Common myeloid progenitor, CD34-positive (primary cell): ENCODE measurements at regions of chr21 and their contacts with region 1.

Region 1: GRCh38 chr21:32597205-32597604 is 11.9 kb upstream of the TCP10L start:
- DNase-seq: no peak
- H3K4me3 ChIP-seq: no peak overlapping the region
- H3K27ac ChIP-seq: no peak overlapping the region
- H3K4me1 ChIP-seq: no peaks in the 10 kb centered on the region
- H3K27me3 ChIP-seq: no peaks in the 10 kb centered on the region

Region 2: GRCh38 chr21:32120230-32120629 is 477.0 kb before region 1 on chr21:
- CTCF ChIA-PET with region 1: no interaction called
- POLR2A ChIA-PET with region 1: interaction called, 10 read pairs
- DNase-seq: no peak
- H3K4me3 ChIP-seq: no peak overlapping the region
- H3K27ac ChIP-seq: no peak overlapping the region
- H3K4me1 ChIP-seq: no peaks in the 10 kb centered on the region
- H3K27me3 ChIP-seq: no peaks in the 10 kb centered on the region

Region 3: GRCh38 chr21:32403201-32403777 is 193.9 kb before region 1 on chr21:
- CTCF ChIA-PET with region 1: interaction called, 110 read pairs
- POLR2A ChIA-PET with region 1: interaction called, 3 read pairs
- DNase-seq: peak; percentile 59 to 83 (median 79)
- H3K4me3 ChIP-seq: no peak overlapping the region
- H3K27ac ChIP-seq: no peak overlapping the region
- H3K4me1 ChIP-seq: no peaks in the 10 kb centered on the region
- H3K27me3 ChIP-seq: peaks cover 0 to 5% (median 3%) of the 10 kb centered on the region in 5 experiments

Region 4: DNA sequence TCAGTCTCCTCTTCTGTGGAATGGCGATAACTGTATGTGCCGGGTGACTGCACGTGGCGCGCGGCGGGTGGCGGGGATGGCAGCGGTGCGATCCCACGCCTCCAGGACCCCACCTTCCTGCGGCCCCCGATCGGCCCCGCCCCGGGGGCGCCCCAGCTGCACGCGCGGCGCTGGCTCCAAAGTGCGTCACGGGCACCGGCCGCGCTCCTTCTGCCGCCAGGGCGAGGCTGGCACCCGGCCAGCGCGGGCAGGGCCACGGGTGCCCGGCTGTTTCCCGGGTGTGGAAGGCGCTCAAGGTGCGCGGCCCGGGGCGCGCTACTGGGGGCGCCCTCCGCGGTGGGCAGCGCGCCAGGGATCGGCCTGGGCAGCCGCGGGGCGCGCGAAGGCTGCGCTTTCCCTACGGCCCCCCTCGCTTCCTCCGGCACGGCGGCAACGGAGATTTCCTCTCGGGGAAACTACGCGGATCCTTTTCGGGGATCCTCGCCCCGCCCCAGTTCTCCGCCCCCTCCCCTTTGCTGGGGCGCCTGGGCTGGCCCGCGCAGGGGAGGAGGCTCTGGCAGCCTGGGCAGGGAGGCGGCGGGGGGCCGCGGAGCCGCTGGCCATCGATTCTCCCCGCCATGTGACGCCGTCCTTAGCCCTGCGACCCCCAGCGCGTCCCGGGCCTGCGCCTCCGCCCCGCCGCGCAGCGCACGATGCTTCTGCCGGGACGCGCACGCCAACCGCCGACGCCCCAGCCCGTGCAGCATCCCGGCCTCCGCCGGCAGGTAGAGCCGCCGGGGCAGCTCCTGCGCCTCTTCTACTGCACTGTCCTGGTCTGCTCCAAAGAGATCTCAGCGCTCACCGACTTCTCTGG is 184.8 kb before region 1 on chr21 and contains the start of gene EVA1C:
- CTCF ChIA-PET with region 1: interaction called, 48 read pairs
- POLR2A ChIA-PET with region 1: no interaction called
- DNase-seq: peak; percentile 64 to 78 (median 78)
- H3K4me3 ChIP-seq: peak within 1 kb of the TSS; percentile 37 to 87 (median 72)
- H3K27ac ChIP-seq: peak within 1 kb of the TSS in 1 of 2 experiments; percentile 25
- H3K4me1 ChIP-seq: peaks cover 0 to 31% (median 22%) of the 10 kb centered on the region in 4 experiments
- H3K27me3 ChIP-seq: peaks cover 0 to 9% (median 0%) of the 10 kb centered on the region in 5 experiments

Region 5: GRCh38 chr21:32612075-32612998 is 15.1 kb after region 1 on chr21 and contains the start of gene CFAP298:
- CTCF ChIA-PET with region 1: interaction called, 19 read pairs
- POLR2A ChIA-PET with region 1: interaction called, 4 read pairs
- DNase-seq: peak; percentile 93 to 97 (median 96)
- H3K4me3 ChIP-seq: peak within 1 kb of the TSS; percentile 87 to 98 (median 97)
- H3K27ac ChIP-seq: peak within 1 kb of the TSS; percentile 93 to 96
- H3K4me1 ChIP-seq: peaks cover 0 to 22% (median 5%) of the 10 kb centered on the region in 4 experiments
- H3K27me3 ChIP-seq: no peaks in the 10 kb centered on the region

Region 6: GRCh38 chr21:32674731-32675130 is 77.5 kb after region 1 on chr21:
- CTCF ChIA-PET with region 1: no interaction called
- POLR2A ChIA-PET with region 1: no interaction called
- DNase-seq: no peak
- H3K4me3 ChIP-seq: no peak overlapping the region
- H3K27ac ChIP-seq: no peak overlapping the region
- H3K4me1 ChIP-seq: no peaks in the 10 kb centered on the region
- H3K27me3 ChIP-seq: no peaks in the 10 kb centered on the region